Activated CD4-positive, alpha-beta T cell treated with anti-CD3 and anti-CD28 coated beads for 36 hours (primary cell): ENCODE measurements at regions of chr20 and their contacts with region 1.

Region 1: DNA sequence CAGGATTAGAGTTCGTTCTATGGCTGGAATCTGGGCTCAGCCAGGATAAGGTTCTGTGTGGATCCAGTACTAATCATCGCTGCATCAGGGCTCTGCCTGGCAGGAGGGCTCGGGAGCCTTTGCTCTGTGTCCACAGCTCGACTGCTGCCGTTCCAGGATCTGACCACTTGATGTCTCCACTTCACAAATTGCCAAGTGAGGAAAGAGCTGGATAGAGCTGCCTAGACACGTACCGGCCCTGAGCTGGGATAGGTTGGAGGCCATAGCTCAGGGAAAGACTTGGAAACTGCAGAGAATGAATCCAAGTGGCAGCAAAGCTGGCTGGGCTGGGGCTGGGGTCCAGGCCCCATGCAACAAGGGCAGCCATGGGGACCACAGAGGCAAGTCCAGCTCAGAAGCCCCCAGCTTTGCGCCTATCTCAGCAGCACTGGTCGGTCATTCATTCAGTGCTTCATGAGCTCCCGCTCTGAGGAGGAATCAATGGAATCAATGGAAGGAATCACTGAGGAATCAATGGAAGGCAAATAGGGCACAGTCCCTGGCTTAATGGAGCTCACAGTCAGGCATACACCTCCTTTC is 38.0 kb upstream of the TOP1 start:
- DNase-seq: peak; percentile 85
- ATAC-seq: peak; percentile 98
- H3K4me3 Mint-ChIP-seq: no peak overlapping the region
- H3K27ac Mint-ChIP-seq: peak overlapping the region; percentile 78
- H3K4me1 Mint-ChIP-seq: peaks cover 28% of the 10 kb centered on the region
- H3K27me3 Mint-ChIP-seq: no peaks in the 10 kb centered on the region

Region 2: DNA sequence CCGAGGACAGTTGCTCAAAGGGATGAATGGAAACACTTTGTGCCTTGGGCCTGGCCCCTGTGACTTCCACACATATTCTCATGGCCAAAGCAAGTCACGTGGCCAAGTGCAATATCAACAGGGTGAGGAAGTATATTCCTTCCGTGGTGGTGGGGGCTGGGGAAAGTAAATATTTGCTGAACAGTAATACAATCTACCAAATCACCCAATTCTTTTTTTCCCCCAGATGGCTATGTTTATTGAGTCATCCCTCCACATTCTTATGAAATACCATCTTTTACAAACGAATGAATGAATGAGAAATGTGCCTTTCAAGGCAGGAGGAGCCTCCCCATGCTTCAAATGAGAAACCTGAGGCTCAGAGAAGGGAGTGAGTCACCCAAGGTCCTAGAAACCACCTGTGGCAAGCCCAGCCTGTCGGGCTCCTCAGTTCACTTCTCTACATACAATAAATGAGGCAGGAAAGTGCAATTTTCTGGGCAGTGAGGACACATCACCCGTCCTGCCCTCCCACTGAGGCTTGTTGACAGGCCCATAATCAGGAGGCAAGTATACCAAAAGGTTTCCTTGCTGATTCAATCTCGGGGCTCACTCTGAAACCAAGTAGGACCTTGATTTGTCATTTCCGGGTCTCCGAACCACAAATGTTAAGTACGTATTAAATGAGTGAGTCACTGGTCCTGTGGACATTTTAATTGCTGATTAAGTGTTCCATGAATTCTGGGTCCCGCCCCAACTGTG is 12.7 kb after region 1 on chr20:
- CTCF ChIA-PET with region 1: interaction called, 29 read pairs
- POLR2A ChIA-PET with region 1: no interaction called
- intact Hi-C with region 1: no loop called
- DNase-seq: peak; percentile 83
- ATAC-seq: peak; percentile 89
- H3K4me3 Mint-ChIP-seq: peak overlapping the region; percentile 28
- H3K27ac Mint-ChIP-seq: peak overlapping the region; percentile 89
- H3K4me1 Mint-ChIP-seq: peaks cover 37% of the 10 kb centered on the region
- H3K27me3 Mint-ChIP-seq: no peaks in the 10 kb centered on the region

Region 3: DNA sequence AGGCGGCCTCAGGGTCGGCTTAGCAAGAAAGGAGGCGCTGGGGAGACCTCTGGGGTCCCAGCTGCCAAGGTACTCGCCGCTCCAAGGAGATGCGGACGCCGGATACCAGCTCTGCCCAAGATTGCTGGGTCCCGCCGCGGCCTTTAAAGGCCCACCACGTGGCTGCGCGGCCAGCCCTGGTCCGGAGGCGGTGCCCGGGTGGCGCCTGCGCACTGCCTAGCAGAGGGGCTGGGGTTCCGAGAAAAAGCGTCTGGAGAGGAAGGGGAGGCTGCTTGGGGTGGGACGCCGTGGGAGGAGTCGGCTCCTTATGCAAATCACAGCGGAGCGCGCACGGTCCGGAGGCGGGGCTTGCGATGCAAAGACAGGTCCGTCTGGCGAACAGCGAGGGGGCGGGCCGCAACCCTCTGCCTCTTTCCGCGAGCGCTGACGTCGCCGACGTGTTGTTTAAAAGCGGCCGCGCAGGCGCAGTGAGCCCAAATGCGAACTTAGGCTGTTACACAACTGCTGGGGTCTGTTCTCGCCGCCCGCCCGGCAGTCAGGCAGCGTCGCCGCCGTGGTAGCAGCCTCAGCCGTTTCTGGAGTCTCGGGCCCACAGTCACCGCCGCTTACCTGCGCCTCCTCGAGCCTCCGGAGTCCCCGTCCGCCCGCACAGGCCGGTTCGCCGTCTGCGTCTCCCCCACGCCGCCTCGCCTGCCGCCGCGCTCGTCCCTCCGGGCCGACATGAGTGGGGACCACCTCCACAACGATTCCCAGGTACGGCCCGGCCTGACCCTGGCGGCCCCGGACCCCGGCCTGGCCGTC is 37.9 kb after region 1 on chr20 and contains the start of gene TOP1:
- CTCF ChIA-PET with region 1: interaction called, 23 read pairs
- POLR2A ChIA-PET with region 1: interaction called, 6 read pairs
- intact Hi-C with region 1: loop called in 1 of 2 experiments (anchors 2 kb)
- DNase-seq: peak; percentile 100
- ATAC-seq: peak; percentile 98
- H3K4me3 Mint-ChIP-seq: peak within 1 kb of the TSS; percentile 84
- H3K27ac Mint-ChIP-seq: peak within 1 kb of the TSS; percentile 92
- H3K4me1 Mint-ChIP-seq: peaks cover 45% of the 10 kb centered on the region
- H3K27me3 Mint-ChIP-seq: no peaks in the 10 kb centered on the region
- total RNA-seq, gene TOP1: 111 to 124 TPM

Region 4: GRCh38 chr20:41047975-41048305 is 57.3 kb after region 1 on chr20:
- CTCF ChIA-PET with region 1: interaction called, 16 read pairs
- POLR2A ChIA-PET with region 1: interaction called, 3 read pairs
- intact Hi-C with region 1: no loop called
- DNase-seq: no peak
- ATAC-seq: peak; percentile 46
- H3K4me3 Mint-ChIP-seq: peak overlapping the region; percentile 72
- H3K27ac Mint-ChIP-seq: peak overlapping the region; percentile 87
- H3K4me1 Mint-ChIP-seq: peaks cover 89% of the 10 kb centered on the region
- H3K27me3 Mint-ChIP-seq: no peaks in the 10 kb centered on the region

Region 5: DNA sequence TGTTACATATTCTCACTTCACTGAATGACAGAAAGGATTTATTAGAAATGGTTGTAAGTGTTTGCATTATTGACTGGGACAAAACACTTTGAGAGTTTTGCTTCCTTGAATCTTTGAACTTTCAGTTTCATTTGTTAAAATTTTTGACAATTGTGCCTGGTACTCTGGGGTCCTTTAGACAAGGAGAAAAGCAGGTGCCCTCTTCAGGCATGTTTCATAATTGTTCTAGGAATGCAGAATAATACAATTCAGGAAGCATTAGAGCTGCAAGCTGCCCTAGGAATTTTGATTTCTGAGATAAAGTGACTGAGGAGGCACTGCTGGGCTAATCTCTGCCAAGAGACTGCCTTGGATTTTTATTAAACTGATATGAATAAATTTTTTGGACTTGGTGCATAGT is 87.7 kb after region 1 on chr20:
- CTCF ChIA-PET with region 1: interaction called, 20 read pairs
- POLR2A ChIA-PET with region 1: no interaction called
- intact Hi-C with region 1: loop called in 1 of 2 experiments (anchors 5 kb)
- DNase-seq: no peak
- ATAC-seq: no peak
- H3K4me3 Mint-ChIP-seq: no peak overlapping the region
- H3K27ac Mint-ChIP-seq: peak overlapping the region; percentile 70
- H3K4me1 Mint-ChIP-seq: peaks cover 52% of the 10 kb centered on the region
- H3K27me3 Mint-ChIP-seq: no peaks in the 10 kb centered on the region